ENCODE measurements at regions of chr6 and their contacts with region 1.

Region 1: GRCh38 chr6:44387346-44388133 is at the start of gene CDC5L:
- DNase-seq: peak; percentile 95 to 97 (median 96)
- H3K4me3 ChIP-seq: peak within 1 kb of the TSS; percentile 91 to 93
- H3K4me3 Mint-ChIP-seq: peak within 1 kb of the TSS; percentile 93 to 99 (median 97)
- H3K27ac ChIP-seq: peak within 1 kb of the TSS; percentile 89
- H3K27ac Mint-ChIP-seq: peak within 1 kb of the TSS; percentile 95 to 99 (median 98)
- H3K4me1 ChIP-seq: peaks cover 30% of the 10 kb centered on the region
- H3K4me1 Mint-ChIP-seq: peaks cover 31 to 43% (median 38%) of the 10 kb centered on the region in 4 donors
- H3K27me3 ChIP-seq: no peaks in the 10 kb centered on the region
- H3K27me3 Mint-ChIP-seq: no peaks in the 10 kb centered on the region
- total RNA-seq, gene CDC5L: 20.9 to 22.4 TPM

Region 2: DNA sequence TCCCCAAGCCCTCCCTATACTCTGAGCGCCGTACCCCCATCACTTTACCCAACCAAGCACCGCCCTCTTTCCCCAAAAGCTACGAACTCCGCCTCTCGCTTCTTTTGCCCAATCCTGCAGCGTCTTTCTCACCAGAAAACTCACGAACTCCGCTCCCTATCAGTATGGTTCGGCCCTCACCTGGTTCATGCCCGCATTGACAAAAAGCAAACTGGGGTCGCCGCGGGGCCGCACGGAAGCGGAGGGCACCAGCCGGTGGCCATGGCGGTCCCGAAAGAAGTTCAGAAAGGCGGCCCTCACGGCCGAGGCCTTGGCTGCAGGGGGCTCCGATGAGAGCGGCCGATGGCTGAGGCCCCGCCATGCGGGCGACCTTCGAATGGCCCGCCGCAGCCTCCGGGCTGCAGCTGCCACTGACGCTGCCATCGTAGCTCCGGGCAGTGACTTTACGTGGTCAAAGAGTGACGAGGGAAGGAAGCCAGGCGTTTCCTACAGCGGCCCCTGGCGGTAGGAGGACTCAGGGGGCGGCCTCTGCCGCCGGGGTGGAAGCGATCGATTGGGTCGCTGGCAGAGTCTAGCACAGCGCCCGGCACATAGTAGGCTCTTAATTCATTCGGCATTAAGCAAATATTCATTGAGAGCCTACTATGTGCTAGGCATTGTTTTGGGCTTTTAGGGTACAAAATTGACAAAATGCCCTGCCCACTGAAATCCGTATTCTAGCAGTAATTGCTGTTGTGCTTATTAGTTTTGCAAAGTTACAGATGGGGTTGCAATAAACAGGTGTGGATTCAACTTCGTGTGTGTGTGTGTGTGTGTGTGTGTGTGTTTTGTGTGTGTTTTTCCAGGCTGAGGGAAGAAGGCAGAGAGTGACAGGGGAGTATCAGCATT is 74.4 kb before region 1 on chr6 and contains the start of gene AARS2:
- CTCF ChIA-PET with region 1: interaction called, 3 read pairs
- POLR2A ChIA-PET with region 1: interaction called, 3 read pairs
- intact Hi-C with region 1: loop called (anchors 1 kb)
- DNase-seq: peak; percentile 86 to 90 (median 87)
- H3K4me3 ChIP-seq: peak within 1 kb of the TSS; percentile 61 to 91
- H3K4me3 Mint-ChIP-seq: peak within 1 kb of the TSS; percentile 90 to 98 (median 96)
- H3K27ac ChIP-seq: peak within 1 kb of the TSS; percentile 79
- H3K27ac Mint-ChIP-seq: peak within 1 kb of the TSS; percentile 82 to 96 (median 95)
- H3K4me1 ChIP-seq: peaks cover 11% of the 10 kb centered on the region
- H3K4me1 Mint-ChIP-seq: peaks cover 5 to 30% (median 20%) of the 10 kb centered on the region in 4 donors
- H3K27me3 ChIP-seq: no peaks in the 10 kb centered on the region
- H3K27me3 Mint-ChIP-seq: peaks cover 0 to 6% of the 10 kb centered on the region in 2 donors
- total RNA-seq, gene AARS2: 23.7 to 25.6 TPM

Region 3: GRCh38 chr6:44353336-44353735 is 34.2 kb before region 1 on chr6:
- CTCF ChIA-PET with region 1: no interaction called
- POLR2A ChIA-PET with region 1: no interaction called
- intact Hi-C with region 1: no loop called
- DNase-seq: no peak
- H3K4me3 ChIP-seq: no peak overlapping the region
- H3K4me3 Mint-ChIP-seq: no peak overlapping the region
- H3K27ac ChIP-seq: no peak overlapping the region
- H3K27ac Mint-ChIP-seq: no peak overlapping the region
- H3K4me1 ChIP-seq: no peaks in the 10 kb centered on the region
- H3K4me1 Mint-ChIP-seq: no peaks in the 10 kb centered on the region
- H3K27me3 ChIP-seq: no peaks in the 10 kb centered on the region
- H3K27me3 Mint-ChIP-seq: peaks cover 0 to 8% of the 10 kb centered on the region in 2 donors

Region 4: DNA sequence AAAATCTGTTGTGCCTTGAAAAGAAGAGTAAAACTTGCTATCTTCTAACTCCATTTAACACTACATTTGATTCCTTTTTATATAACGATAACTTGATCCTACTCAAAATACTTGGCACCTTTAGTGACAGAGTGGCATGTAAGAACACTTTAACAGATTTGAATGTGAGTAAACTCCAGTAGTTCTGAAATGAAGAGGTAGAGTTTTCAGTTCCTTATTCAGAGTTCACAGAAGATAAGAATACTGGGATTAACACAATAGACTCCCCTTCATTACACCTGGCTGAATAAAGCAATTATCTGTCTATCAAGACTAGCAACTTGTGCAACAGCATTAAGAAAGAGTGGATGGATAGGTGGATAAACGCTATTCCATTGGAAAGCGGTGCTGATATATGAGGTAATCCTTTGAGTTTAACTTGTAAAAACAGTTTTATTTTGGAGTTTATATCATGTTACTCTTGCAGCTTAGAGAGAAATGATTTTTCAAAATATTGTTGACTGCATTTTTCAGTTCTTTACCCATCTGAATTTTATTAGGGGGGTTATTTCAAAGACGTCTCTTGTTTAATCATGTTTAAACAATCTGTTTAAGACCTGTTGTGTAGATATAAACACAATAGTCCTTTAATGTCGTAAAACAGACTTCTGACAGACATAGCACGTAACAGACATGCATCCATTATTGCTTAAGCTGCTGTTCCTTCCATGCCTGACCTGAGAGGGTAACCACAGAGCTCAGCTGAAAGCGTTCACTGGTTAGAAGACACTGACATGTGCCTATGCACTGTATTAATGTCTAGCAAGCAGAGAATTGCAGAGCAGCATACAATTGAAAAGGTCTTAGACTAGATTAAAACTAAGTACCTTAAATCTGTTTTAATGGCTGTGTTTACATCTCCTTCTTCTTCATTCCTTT is 1092.6 kb after region 1 on chr6:
- CTCF ChIA-PET with region 1: no interaction called
- POLR2A ChIA-PET with region 1: no interaction called
- intact Hi-C with region 1: no loop called
- DNase-seq: peak in 1 of 5 donors; percentile 12
- H3K4me3 ChIP-seq: no peak overlapping the region
- H3K4me3 Mint-ChIP-seq: no peak overlapping the region
- H3K27ac ChIP-seq: no peak overlapping the region
- H3K27ac Mint-ChIP-seq: peak overlapping the region in 3 of 7 donors; percentile 23 to 51 (median 34)
- H3K4me1 ChIP-seq: peaks cover 31% of the 10 kb centered on the region
- H3K4me1 Mint-ChIP-seq: peaks cover 11 to 42% (median 31%) of the 10 kb centered on the region in 4 donors
- H3K27me3 ChIP-seq: no peaks in the 10 kb centered on the region
- H3K27me3 Mint-ChIP-seq: no peaks in the 10 kb centered on the region

Measured in CD4-positive, alpha-beta memory T cell (primary cell).